Activated B cell treated with CpG ODN at 0.5 μM for 24 hours (primary cell): ENCODE measurements at regions of chr9 and their contacts with region 1.

Region 1: GRCh38 chr9:31119882-31120454 is 1264.5 kb upstream of the ACO1 start:
- DNase-seq: no peak
- ATAC-seq: peak; percentile 31
- H3K4me3 Mint-ChIP-seq: no peak overlapping the region
- H3K27ac Mint-ChIP-seq: no peak overlapping the region
- H3K4me1 Mint-ChIP-seq: no peaks in the 10 kb centered on the region
- H3K27me3 Mint-ChIP-seq: no peaks in the 10 kb centered on the region
- CTCF ChIP-seq: no peak

Region 2: DNA sequence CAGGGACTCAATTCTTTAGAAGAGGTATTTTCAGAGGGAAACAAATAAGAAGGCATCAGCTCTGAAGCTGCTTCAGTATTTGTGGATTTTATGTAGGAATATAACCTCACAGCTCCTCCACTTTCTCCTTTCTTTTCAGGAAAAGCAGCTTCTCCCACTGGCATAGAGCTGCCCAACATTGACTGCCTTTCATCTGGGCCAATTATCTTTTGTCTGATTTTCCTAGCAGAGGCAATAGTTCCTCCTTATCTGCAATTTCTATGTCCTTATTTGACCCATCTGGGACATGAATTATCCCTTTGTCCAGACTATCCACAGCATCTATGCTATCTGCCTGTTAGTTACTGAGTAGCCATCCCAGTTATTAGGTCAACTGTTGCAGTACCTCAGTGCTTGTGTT is 406.7 kb before region 1 on chr9:
- CTCF ChIA-PET with region 1: no interaction called
- POLR2A ChIA-PET with region 1: no interaction called
- intact Hi-C with region 1: no loop called
- DNase-seq: no peak
- ATAC-seq: no peak
- H3K4me3 Mint-ChIP-seq: no peak overlapping the region
- H3K27ac Mint-ChIP-seq: no peak overlapping the region
- H3K4me1 Mint-ChIP-seq: no peaks in the 10 kb centered on the region
- H3K27me3 Mint-ChIP-seq: no peaks in the 10 kb centered on the region
- CTCF ChIP-seq: no peak

Region 3: DNA sequence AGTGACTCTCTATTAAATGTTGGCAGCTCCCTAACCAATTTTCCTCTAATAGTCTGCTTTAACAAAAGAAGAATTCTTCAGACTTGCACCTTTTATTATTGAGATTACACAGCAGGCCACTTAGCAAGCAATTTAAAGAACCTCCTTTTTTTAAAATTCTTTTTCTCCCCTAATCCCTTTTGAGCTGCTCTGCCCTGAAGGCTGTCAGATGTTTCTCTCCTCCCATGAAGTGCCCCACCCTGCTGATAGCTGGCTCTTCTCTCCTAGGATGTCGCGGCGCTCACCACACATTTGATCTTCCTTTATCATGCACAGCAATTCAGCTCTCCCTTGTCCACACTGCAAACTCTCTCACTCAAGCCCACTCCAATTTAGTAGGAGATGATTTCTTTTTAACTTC is 206.6 kb before region 1 on chr9:
- CTCF ChIA-PET with region 1: no interaction called
- POLR2A ChIA-PET with region 1: no interaction called
- intact Hi-C with region 1: no loop called
- DNase-seq: no peak
- ATAC-seq: no peak
- H3K4me3 Mint-ChIP-seq: no peak overlapping the region
- H3K27ac Mint-ChIP-seq: no peak overlapping the region
- H3K4me1 Mint-ChIP-seq: no peaks in the 10 kb centered on the region
- H3K27me3 Mint-ChIP-seq: no peaks in the 10 kb centered on the region
- CTCF ChIP-seq: no peak

Region 4: DNA sequence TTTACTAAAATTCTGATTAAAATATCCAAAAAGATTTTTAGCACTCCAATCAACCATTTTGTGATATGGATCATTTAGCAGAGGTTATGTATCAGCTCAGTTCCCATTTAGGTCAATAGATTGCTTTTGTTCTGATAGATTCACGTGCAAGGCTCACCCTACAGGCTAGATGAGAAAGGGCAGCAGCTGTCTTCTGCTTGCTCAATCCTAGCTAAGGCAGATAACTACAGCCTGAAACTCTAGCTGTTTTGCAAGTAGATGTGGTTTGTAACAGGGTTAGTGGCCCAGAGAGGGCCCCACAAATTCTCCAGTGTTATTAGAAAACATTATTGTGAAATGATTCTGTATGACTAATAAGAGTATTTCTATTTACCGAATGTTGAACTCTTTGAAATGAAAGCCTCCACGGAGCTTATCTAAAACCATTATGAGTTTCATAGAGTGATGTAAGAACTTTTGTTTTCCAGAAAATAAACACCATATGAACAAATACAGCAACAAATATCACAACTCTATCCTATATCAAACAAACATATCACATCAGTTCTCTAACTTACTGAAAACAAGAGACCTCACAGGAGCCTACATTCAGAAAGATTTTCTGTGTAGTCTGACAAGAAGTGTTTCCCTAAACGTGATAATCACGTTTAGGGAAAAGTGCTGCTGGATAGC is 422.6 kb after region 1 on chr9:
- CTCF ChIA-PET with region 1: no interaction called
- POLR2A ChIA-PET with region 1: no interaction called
- intact Hi-C with region 1: loop called (anchors 1 kb)
- DNase-seq: no peak
- ATAC-seq: peak; percentile 31
- H3K4me3 Mint-ChIP-seq: no peak overlapping the region
- H3K27ac Mint-ChIP-seq: no peak overlapping the region
- H3K4me1 Mint-ChIP-seq: no peaks in the 10 kb centered on the region
- H3K27me3 Mint-ChIP-seq: no peaks in the 10 kb centered on the region
- CTCF ChIP-seq: no peak

Region 5: GRCh38 chr9:32251539-32251938 is 1131.6 kb after region 1 on chr9:
- CTCF ChIA-PET with region 1: interaction called, 3 read pairs
- POLR2A ChIA-PET with region 1: no interaction called
- intact Hi-C with region 1: loop called (anchors 1 kb)
- DNase-seq: no peak
- ATAC-seq: no peak
- H3K4me3 Mint-ChIP-seq: no peak overlapping the region
- H3K27ac Mint-ChIP-seq: no peak overlapping the region
- H3K4me1 Mint-ChIP-seq: no peaks in the 10 kb centered on the region
- H3K27me3 Mint-ChIP-seq: no peaks in the 10 kb centered on the region
- CTCF ChIP-seq: no peak

Region 6: DNA sequence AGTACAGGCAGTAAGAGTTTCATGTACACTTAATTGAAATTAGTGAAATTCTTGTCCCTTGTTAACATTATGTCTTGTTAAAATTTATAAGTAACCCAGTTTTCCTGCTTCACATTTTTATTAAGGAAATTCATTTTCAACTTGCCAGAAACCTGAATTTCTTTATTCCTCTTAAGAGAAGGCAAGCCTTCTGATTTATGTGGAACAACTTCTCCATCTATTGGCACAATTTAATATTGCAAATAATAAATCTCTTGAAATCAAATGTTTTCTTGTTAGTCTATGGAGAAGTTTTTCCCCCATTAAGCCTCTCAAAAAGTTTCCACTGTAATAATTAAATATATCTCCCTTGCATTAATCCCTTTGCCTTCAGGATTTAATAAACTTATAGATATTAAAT is 1230.7 kb after region 1 on chr9:
- CTCF ChIA-PET with region 1: no interaction called
- POLR2A ChIA-PET with region 1: no interaction called
- intact Hi-C with region 1: loop called (anchors 5 kb)
- DNase-seq: no peak
- ATAC-seq: no peak
- H3K4me3 Mint-ChIP-seq: no peak overlapping the region
- H3K27ac Mint-ChIP-seq: no peak overlapping the region
- H3K4me1 Mint-ChIP-seq: no peaks in the 10 kb centered on the region
- H3K27me3 Mint-ChIP-seq: no peaks in the 10 kb centered on the region
- CTCF ChIP-seq: no peak